ENCODE measurements at regions of chr20 and their contacts with region 1.

Region 1: GRCh38 chr20:25690427-25690826 is 6.2 kb downstream of the ZNF337 start:
- DNase-seq: no peak
- ATAC-seq: no peak
- H3K4me3 ChIP-seq: no peak overlapping the region
- H3K27ac ChIP-seq: no peak overlapping the region
- H3K4me1 ChIP-seq: no peaks in the 10 kb centered on the region
- H3K27me3 ChIP-seq: no peaks in the 10 kb centered on the region
- CTCF ChIP-seq: no peak

Region 2: DNA sequence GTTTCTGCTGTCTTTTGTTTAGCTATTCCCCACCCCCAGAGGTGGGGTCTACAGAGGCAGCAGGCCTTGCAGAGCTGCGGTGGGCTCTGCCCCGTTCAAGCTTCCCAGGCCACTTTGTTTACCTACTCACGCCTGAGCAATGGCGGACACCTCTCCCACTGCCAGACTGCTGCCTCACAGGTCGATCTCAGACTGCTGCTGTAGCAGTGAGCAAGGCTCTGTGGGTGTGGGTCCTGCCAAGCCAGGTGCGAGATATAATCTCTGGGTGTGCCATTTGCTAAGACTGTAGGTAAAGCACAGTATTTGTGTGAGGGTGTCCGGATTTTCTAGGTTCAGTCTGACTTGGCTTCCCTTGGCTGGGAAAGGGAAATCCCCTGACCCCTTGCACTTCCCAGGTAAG is 29.9 kb after region 1 on chr20:
- CTCF ChIA-PET with region 1: no interaction called
- POLR2A ChIA-PET with region 1: no interaction called
- in situ Hi-C with region 1: no loop called
- intact Hi-C with region 1: no loop called
- DNase-seq: no peak
- ATAC-seq: no peak
- H3K4me3 ChIP-seq: no peak overlapping the region
- H3K27ac ChIP-seq: no peak overlapping the region
- H3K4me1 ChIP-seq: no peaks in the 10 kb centered on the region
- H3K27me3 ChIP-seq: no peaks in the 10 kb centered on the region
- CTCF ChIP-seq: no peak

Region 3: GRCh38 chr20:25749649-25750048 is 59.2 kb after region 1 on chr20:
- CTCF ChIA-PET with region 1: no interaction called
- POLR2A ChIA-PET with region 1: no interaction called
- in situ Hi-C with region 1: no loop called
- intact Hi-C with region 1: loop called (anchors 2 kb)
- DNase-seq: no peak
- ATAC-seq: no peak
- H3K4me3 ChIP-seq: no peak overlapping the region
- H3K27ac ChIP-seq: no peak overlapping the region
- H3K4me1 ChIP-seq: peaks cover 6% of the 10 kb centered on the region
- H3K27me3 ChIP-seq: no peaks in the 10 kb centered on the region
- CTCF ChIP-seq: no peak

Measured in Panc1 (cell line).